T-cell (primary cell): ENCODE measurements at regions of chr6 and their contacts with region 1.

Region 1: DNA sequence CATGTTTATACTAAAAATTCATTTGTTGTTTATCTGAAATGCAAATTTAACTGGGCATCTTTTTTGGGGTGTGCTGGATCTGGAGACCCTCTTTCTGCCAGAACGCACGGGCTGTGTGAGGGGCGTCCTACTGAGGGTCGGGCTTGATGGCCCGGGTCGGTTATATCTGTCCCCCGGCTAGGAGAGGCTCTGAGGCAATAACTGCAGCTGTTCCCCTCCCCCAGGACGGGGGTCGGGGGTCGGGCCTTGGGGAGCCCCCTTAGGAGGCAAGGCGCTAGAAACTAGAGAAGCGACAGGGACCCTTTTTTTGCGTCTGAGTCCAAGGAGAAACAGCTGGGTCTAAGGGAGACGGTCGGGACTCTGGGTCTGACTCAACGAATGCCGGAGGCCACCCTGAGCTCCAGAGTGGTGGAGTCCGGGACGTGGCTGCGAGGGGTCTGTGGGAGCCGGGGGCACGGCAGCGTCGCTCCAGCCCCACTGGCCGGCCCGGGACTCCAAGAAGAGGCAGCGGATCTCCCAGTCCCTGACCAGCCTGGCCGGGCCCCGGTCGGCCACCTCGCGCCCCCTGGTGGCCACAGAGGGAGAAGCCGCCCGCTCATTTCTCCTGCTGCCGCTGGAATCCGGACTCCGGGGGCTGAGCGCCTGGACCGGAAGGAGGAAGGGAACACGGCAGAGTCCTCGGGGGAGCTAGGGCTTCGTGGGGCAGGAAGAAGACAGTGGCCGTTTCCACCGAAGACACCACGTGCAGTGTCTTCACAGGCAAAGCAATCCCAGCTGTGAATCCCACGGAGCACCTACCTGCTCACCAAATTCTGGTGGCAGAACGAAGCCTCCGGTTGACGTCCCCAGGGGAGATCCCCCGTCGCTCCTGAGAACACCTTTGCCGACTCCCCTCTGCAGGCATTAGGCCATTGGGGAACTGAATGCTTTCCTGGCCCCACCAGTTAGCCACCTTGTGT is 24.0 kb upstream of the SCML4 start:
- DNase-seq: peak; percentile 22 to 86 (median 67)
- ATAC-seq: peak; percentile 85 to 86 (median 86)
- H3K4me3 ChIP-seq: peak overlapping the region; percentile 59 to 67
- H3K4me3 Mint-ChIP-seq: peak overlapping the region; percentile 72 to 82 (median 78)
- H3K27ac ChIP-seq: peak overlapping the region; percentile 47
- H3K27ac Mint-ChIP-seq: peak overlapping the region; percentile 78 to 88
- H3K4me1 ChIP-seq: peaks cover 5 to 19% of the 10 kb centered on the region in 2 experiments
- H3K4me1 Mint-ChIP-seq: peaks cover 22 to 37% (median 31%) of the 10 kb centered on the region in 3 donors
- H3K27me3 ChIP-seq: peaks cover 0 to 3% of the 10 kb centered on the region in 2 experiments
- H3K27me3 Mint-ChIP-seq: no peaks in the 10 kb centered on the region

Region 2: DNA sequence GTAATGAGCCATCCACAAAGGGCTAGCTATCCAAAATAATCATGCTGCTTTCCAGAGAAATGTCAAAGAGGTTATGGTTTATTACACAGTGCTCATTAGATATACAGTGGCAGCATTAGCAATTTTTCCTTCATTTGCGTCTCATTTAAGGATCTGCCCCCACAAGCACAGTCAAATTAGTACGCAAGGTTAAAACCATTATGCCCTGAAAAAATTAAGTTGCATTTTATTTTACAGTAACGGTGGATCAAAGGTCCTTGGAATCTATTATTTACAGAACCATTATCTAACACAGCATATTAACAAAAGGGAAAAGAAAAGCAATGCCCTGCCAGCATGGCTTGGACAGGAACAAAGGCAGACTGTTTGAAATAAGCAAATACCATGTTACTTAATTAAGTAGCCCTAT is 533.6 kb before region 1 on chr6:
- CTCF ChIA-PET with region 1: no interaction called
- POLR2A ChIA-PET with region 1: no interaction called
- DNase-seq: no peak
- ATAC-seq: no peak
- H3K4me3 ChIP-seq: no peak overlapping the region
- H3K4me3 Mint-ChIP-seq: no peak overlapping the region
- H3K27ac ChIP-seq: no peak overlapping the region
- H3K27ac Mint-ChIP-seq: no peak overlapping the region
- H3K4me1 ChIP-seq: no peaks in the 10 kb centered on the region
- H3K4me1 Mint-ChIP-seq: peaks cover 0 to 8% (median 2%) of the 10 kb centered on the region in 3 donors
- H3K27me3 ChIP-seq: no peaks in the 10 kb centered on the region
- H3K27me3 Mint-ChIP-seq: no peaks in the 10 kb centered on the region

Region 3: DNA sequence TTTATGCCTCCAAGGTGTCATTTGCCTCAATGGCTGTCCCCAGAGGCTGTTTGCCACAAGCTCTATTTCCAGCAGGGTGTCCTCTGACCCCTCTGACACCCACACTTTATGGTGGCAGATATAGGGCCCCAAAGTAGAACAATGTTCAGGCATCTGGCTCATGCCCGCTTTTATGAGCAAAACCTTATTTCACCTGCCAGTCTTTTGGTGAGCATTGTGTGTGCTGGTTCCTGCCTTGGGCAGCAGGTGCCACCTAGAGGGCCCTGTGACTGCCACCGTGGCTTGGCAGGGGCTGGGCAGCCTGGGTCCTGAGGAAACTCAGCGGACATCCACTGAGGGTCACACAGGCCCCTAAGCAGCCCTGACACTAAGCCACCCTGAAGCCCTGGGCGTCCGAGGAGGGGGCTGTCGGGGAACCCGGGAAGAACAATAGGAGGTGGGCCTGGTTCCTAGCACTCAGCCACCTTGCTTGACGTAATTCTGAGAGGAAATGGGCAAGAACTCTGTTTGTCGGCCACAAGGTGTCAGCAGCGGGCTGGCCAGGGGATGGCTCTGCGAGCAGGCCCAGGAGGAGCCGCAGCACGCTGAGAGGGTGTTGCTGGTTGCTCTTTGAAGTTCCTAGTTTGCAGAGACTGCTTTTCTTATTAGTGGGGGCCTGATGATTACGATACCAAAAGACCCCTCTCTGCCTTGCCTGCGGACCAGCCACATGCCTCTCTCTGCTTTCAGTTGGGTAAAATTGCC is 173.0 kb before region 1 on chr6:
- CTCF ChIA-PET with region 1: interaction called, 6 to 14 read pairs
- POLR2A ChIA-PET with region 1: interaction called in 1 of 2 experiments, 3 read pairs
- DNase-seq: peak; percentile 72 to 93 (median 85)
- ATAC-seq: peak; percentile 96 to 98 (median 97)
- H3K4me3 ChIP-seq: peak overlapping the region; percentile 11 to 41
- H3K4me3 Mint-ChIP-seq: peak overlapping the region; percentile 51 to 66 (median 65)
- H3K27ac ChIP-seq: peak overlapping the region; percentile 62
- H3K27ac Mint-ChIP-seq: peak overlapping the region; percentile 79 to 87
- H3K4me1 ChIP-seq: peaks cover 3 to 21% of the 10 kb centered on the region in 2 experiments
- H3K4me1 Mint-ChIP-seq: peaks cover 12 to 16% (median 16%) of the 10 kb centered on the region in 3 donors
- H3K27me3 ChIP-seq: no peaks in the 10 kb centered on the region
- H3K27me3 Mint-ChIP-seq: no peaks in the 10 kb centered on the region

Region 4: GRCh38 chr6:107731422-107732319 is 116.5 kb before region 1 on chr6:
- CTCF ChIA-PET with region 1: interaction called, 27 to 49 read pairs
- POLR2A ChIA-PET with region 1: no interaction called
- DNase-seq: peak in 21 of 35 experiments; percentile 17 to 55 (median 36)
- ATAC-seq: peak; percentile 49 to 62 (median 60)
- H3K4me3 ChIP-seq: peak overlapping the region; percentile 71 to 79
- H3K4me3 Mint-ChIP-seq: peak overlapping the region; percentile 94 to 97 (median 94)
- H3K27ac ChIP-seq: peak overlapping the region; percentile 78
- H3K27ac Mint-ChIP-seq: peak overlapping the region; percentile 96 to 99
- H3K4me1 ChIP-seq: peaks cover 52 to 75% of the 10 kb centered on the region in 2 experiments
- H3K4me1 Mint-ChIP-seq: peaks cover 90 to 95% (median 94%) of the 10 kb centered on the region in 3 donors
- H3K27me3 ChIP-seq: no peaks in the 10 kb centered on the region
- H3K27me3 Mint-ChIP-seq: no peaks in the 10 kb centered on the region

Region 5: DNA sequence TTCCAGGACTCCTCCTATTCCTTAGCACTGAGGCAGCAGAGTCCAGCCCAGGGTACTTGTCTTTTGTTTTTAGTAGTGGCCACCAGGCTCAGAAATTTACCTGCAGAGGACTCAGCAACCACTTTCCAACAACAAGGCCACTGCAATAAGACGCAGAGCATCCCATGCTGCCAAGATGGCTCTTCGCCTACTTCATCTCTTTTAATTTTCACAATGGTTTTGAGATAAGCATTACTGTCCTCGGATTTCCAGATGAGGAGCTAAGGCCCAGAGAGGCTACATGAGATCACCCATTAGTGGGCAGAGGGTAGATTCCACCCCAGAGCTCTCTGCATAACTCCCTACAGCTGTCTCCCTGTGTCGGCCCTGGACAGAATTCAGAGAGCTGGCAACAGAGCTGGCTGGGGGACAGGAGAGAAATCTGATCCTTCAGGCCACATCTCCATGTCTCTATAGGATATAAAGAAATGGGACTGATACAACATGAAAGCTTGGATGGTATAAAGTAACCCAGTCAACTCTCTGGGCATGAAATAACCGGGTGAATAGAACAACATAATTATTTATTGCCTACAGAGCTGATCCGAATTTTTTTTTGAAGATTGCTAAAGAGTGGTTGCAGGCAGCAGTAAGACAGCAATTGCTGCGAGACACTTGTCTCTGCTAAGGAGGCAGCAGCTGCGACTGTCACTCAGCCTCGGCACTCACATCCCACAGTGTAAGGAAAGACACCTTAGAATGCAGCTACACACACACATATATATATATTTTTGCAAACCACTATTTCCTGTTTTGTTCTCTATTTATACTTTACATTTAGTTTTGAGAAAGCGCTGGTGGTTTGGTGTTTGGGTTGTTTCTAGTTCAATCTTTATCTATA is 61.2 kb before region 1 on chr6:
- CTCF ChIA-PET with region 1: interaction called, 10 to 17 read pairs
- POLR2A ChIA-PET with region 1: no interaction called
- DNase-seq: peak in 34 of 35 experiments; percentile 20 to 76 (median 50)
- ATAC-seq: peak; percentile 73 to 85 (median 80)
- H3K4me3 ChIP-seq: peak overlapping the region; percentile 15 to 46
- H3K4me3 Mint-ChIP-seq: peak overlapping the region; percentile 68 to 73 (median 68)
- H3K27ac ChIP-seq: peak overlapping the region; percentile 72
- H3K27ac Mint-ChIP-seq: peak overlapping the region; percentile 85 to 98
- H3K4me1 ChIP-seq: peaks cover 69 to 77% of the 10 kb centered on the region in 2 experiments
- H3K4me1 Mint-ChIP-seq: peaks cover 85 to 91% (median 89%) of the 10 kb centered on the region in 3 donors
- H3K27me3 ChIP-seq: no peaks in the 10 kb centered on the region
- H3K27me3 Mint-ChIP-seq: no peaks in the 10 kb centered on the region

Region 6: GRCh38 chr6:107820338-107821261 is 27.5 kb before region 1 on chr6:
- CTCF ChIA-PET with region 1: interaction called, 9 to 58 read pairs
- POLR2A ChIA-PET with region 1: interaction called, 5 to 12 read pairs
- DNase-seq: peak in 34 of 35 experiments; percentile 7 to 66 (median 36)
- ATAC-seq: peak in 3 of 4 experiments; percentile 14 to 27 (median 24)
- H3K4me3 ChIP-seq: peak overlapping the region; percentile 68 to 73
- H3K4me3 Mint-ChIP-seq: peak overlapping the region; percentile 89 to 96 (median 96)
- H3K27ac ChIP-seq: peak overlapping the region; percentile 93
- H3K27ac Mint-ChIP-seq: peak overlapping the region; percentile 96 to 97
- H3K4me1 ChIP-seq: peaks cover 56 to 69% of the 10 kb centered on the region in 2 experiments
- H3K4me1 Mint-ChIP-seq: peaks cover 77 to 92% (median 84%) of the 10 kb centered on the region in 3 donors
- H3K27me3 ChIP-seq: no peaks in the 10 kb centered on the region
- H3K27me3 Mint-ChIP-seq: no peaks in the 10 kb centered on the region

Region 7: GRCh38 chr6:107832151-107833056 is 15.7 kb before region 1 on chr6:
- CTCF ChIA-PET with region 1: interaction called, 7 to 13 read pairs
- POLR2A ChIA-PET with region 1: interaction called in 1 of 2 experiments, 3 read pairs
- DNase-seq: no peak
- ATAC-seq: peak; percentile 19 to 56 (median 36)
- H3K4me3 ChIP-seq: no peak overlapping the region
- H3K4me3 Mint-ChIP-seq: peak overlapping the region in 2 of 3 donors; percentile 21 to 27
- H3K27ac ChIP-seq: no peak overlapping the region
- H3K27ac Mint-ChIP-seq: peak overlapping the region; percentile 75 to 82
- H3K4me1 ChIP-seq: peaks cover 5 to 19% of the 10 kb centered on the region in 2 experiments
- H3K4me1 Mint-ChIP-seq: peaks cover 24 to 29% (median 24%) of the 10 kb centered on the region in 3 donors
- H3K27me3 ChIP-seq: no peaks in the 10 kb centered on the region
- H3K27me3 Mint-ChIP-seq: no peaks in the 10 kb centered on the region

Region 8: GRCh38 chr6:107866606-107867301 is 18.6 kb after region 1 on chr6:
- CTCF ChIA-PET with region 1: interaction called, 4 to 14 read pairs
- POLR2A ChIA-PET with region 1: interaction called in 1 of 2 experiments, 3 read pairs
- DNase-seq: peak in 20 of 35 experiments; percentile 10 to 75 (median 20)
- ATAC-seq: peak; percentile 60 to 73 (median 67)
- H3K4me3 ChIP-seq: no peak overlapping the region
- H3K4me3 Mint-ChIP-seq: peak overlapping the region in 1 of 3 donors; percentile 31
- H3K27ac ChIP-seq: no peak overlapping the region
- H3K27ac Mint-ChIP-seq: no peak overlapping the region
- H3K4me1 ChIP-seq: peaks cover 0 to 4% of the 10 kb centered on the region in 2 experiments
- H3K4me1 Mint-ChIP-seq: peaks cover 0 to 7% (median 4%) of the 10 kb centered on the region in 3 donors
- H3K27me3 ChIP-seq: peaks cover 0 to 11% of the 10 kb centered on the region in 2 experiments
- H3K27me3 Mint-ChIP-seq: no peaks in the 10 kb centered on the region